ENCODE measurements at regions of chrX and their contacts with region 1.

Region 1: GRCh38 chrX:130024127-130024526 is 41.7 kb downstream of the BCORL1 start:
- DNase-seq: peak; percentile 89
- H3K4me3 Mint-ChIP-seq: no peak overlapping the region
- H3K27ac Mint-ChIP-seq: peak overlapping the region; percentile 47
- H3K4me1 Mint-ChIP-seq: peaks cover 10% of the 10 kb centered on the region
- H3K27me3 Mint-ChIP-seq: no peaks in the 10 kb centered on the region

Region 2: GRCh38 chrX:129908636-129909035 is 115.5 kb before region 1 on chrX:
- CTCF ChIA-PET with region 1: no interaction called
- POLR2A ChIA-PET with region 1: no interaction called
- intact Hi-C with region 1: no loop called
- DNase-seq: no peak
- H3K4me3 Mint-ChIP-seq: no peak overlapping the region
- H3K27ac Mint-ChIP-seq: no peak overlapping the region
- H3K4me1 Mint-ChIP-seq: peaks cover 20% of the 10 kb centered on the region
- H3K27me3 Mint-ChIP-seq: no peaks in the 10 kb centered on the region

Region 3: GRCh38 chrX:129925305-129926092 is 98.6 kb before region 1 on chrX:
- CTCF ChIA-PET with region 1: interaction called, 102 read pairs
- POLR2A ChIA-PET with region 1: interaction called, 3 read pairs
- intact Hi-C with region 1: loop called (anchors 1 kb)
- DNase-seq: peak; percentile 76
- H3K4me3 Mint-ChIP-seq: no peak overlapping the region
- H3K27ac Mint-ChIP-seq: no peak overlapping the region
- H3K4me1 Mint-ChIP-seq: peaks cover 4% of the 10 kb centered on the region
- H3K27me3 Mint-ChIP-seq: no peaks in the 10 kb centered on the region

Region 4: DNA sequence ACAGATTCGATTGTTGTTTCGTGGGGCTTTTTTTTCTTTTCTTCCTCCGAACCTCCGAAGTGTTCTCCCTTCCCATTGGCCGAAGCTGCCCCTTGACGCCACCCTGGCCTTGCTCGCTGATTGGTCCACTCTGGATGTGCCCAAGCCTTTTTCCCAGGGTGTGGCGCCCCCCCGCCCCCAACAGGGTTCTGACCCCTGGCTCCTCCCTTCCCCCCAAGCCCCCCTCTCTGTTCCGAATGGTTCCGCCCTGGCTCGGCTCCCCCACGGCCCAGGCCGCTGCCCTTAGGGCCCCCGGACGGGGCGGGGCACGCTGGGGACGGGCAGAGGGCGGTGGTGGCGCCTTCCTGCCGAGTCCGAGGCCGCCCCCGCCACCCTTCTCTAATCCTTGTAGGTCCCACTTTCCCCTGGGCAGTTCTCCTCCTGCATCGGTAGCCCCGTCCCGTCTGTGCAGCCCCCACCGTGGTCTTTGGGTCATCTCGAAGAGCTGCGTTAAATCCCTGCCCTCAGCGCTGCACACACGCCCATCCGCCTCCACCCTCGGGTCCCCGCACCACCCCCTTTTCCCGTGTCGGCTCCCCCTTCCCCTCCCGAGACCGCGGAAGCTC is 92.6 kb before region 1 on chrX:
- CTCF ChIA-PET with region 1: interaction called, 102 read pairs
- POLR2A ChIA-PET with region 1: no interaction called
- intact Hi-C with region 1: loop called (anchors 1 kb)
- DNase-seq: peak; percentile 81
- H3K4me3 Mint-ChIP-seq: peak overlapping the region; percentile 74
- H3K27ac Mint-ChIP-seq: peak overlapping the region; percentile 80
- H3K4me1 Mint-ChIP-seq: peaks cover 3% of the 10 kb centered on the region
- H3K27me3 Mint-ChIP-seq: peaks cover 3% of the 10 kb centered on the region